Transverse colon (tissue), 4 donors: ENCODE measurements at regions of chr14 and their contacts with region 1.

Region 1: GRCh38 chr14:47857646-47858045 is 182.2 kb upstream of the MDGA2 start:
- DNase-seq: no peak
- H3K4me3 ChIP-seq: no peak overlapping the region
- H3K27ac ChIP-seq: no peak overlapping the region
- H3K4me1 ChIP-seq: no peaks in the 10 kb centered on the region
- H3K27me3 ChIP-seq: no peaks in the 10 kb centered on the region
- CTCF ChIP-seq: no peak
- EP300 ChIP-seq: no peak
- POLR2A ChIP-seq: no peak

Region 2: GRCh38 chr14:47872588-47872987 is 14.9 kb after region 1 on chr14:
- in situ Hi-C with region 1: no loop called
- intact Hi-C with region 1: loop called (anchors 2 kb)
- DNase-seq: no peak
- H3K4me3 ChIP-seq: no peak overlapping the region
- H3K27ac ChIP-seq: no peak overlapping the region
- H3K4me1 ChIP-seq: no peaks in the 10 kb centered on the region
- H3K27me3 ChIP-seq: no peaks in the 10 kb centered on the region
- CTCF ChIP-seq: no peak
- EP300 ChIP-seq: no peak
- POLR2A ChIP-seq: no peak